ENCODE measurements at regions of chr4 and their contacts with region 1.

Region 1: DNA sequence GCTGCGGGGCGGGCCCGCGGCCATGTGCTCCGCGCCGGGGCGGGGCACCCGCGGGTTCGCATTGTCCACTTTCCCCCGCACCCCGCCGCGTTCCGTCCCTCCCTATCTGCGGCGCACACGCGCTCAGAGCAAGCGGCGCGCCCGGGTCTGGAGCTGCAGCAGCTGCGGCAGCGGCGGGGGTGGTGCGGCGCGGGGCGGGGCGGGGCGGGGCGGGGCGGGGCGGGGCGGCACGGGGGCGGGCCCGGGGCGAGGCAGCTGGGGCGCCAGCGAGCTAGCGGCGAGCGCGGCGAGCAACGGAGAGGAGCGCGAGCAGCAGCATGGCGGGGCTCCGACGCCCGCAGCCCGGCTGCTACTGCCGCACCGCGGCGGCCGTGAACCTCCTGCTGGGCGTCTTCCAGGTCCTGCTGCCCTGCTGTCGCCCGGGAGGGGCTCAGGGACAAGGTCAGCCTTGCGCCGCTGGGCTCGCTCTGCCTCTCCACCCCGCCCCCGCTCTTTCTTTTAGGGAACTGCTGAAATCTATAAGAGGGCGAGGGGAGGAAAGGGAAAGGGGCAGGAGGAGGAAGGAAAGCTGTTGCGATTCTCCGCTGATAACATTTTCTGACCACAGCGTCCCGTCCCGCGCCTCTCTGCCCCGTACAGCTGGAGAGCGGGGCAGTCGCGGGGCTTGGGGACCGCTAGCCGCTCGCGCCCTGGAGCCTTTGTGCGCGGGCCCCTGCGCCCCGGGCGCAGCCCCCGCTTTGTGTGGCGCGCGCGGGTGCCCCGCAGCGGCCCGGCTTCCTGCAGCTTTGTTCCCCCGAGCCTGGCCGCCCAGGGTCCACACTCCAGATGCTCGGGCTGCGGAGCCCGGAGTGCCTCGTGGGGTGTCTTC is at the start of gene TMEM131L:
- DNase-seq: peak; percentile 47 to 92
- ATAC-seq: peak; percentile 71 to 88 (median 84)
- H3K4me3 ChIP-seq: peak within 1 kb of the TSS; percentile 68
- H3K4me3 Mint-ChIP-seq: peak within 1 kb of the TSS; percentile 96
- H3K27ac ChIP-seq: peak within 1 kb of the TSS; percentile 76
- H3K27ac Mint-ChIP-seq: peak within 1 kb of the TSS; percentile 96 to 98
- H3K4me1 ChIP-seq: peaks cover 34% of the 10 kb centered on the region
- H3K4me1 Mint-ChIP-seq: peaks cover 55 to 56% of the 10 kb centered on the region in 2 donors
- H3K27me3 ChIP-seq: no peaks in the 10 kb centered on the region
- H3K27me3 Mint-ChIP-seq: no peaks in the 10 kb centered on the region
- CTCF ChIP-seq: no peak
- total RNA-seq, gene TMEM131L: 67.8 to 105 (median 71.1) TPM

Region 2: GRCh38 chr4:153438916-153439756 is 27.2 kb before region 1 on chr4:
- intact Hi-C with region 1: loop called (anchors 2 kb)
- DNase-seq: peak; percentile 38 to 66
- ATAC-seq: peak; percentile 86 to 92 (median 87)
- H3K4me3 ChIP-seq: peak overlapping the region; percentile 51
- H3K4me3 Mint-ChIP-seq: peak overlapping the region; percentile 89
- H3K27ac ChIP-seq: peak overlapping the region; percentile 98
- H3K27ac Mint-ChIP-seq: peak overlapping the region; percentile 90 to 92
- H3K4me1 ChIP-seq: peaks cover 30% of the 10 kb centered on the region
- H3K4me1 Mint-ChIP-seq: peaks cover 19 to 20% of the 10 kb centered on the region in 2 donors
- H3K27me3 ChIP-seq: no peaks in the 10 kb centered on the region
- H3K27me3 Mint-ChIP-seq: no peaks in the 10 kb centered on the region
- CTCF ChIP-seq: no peak

Region 3: DNA sequence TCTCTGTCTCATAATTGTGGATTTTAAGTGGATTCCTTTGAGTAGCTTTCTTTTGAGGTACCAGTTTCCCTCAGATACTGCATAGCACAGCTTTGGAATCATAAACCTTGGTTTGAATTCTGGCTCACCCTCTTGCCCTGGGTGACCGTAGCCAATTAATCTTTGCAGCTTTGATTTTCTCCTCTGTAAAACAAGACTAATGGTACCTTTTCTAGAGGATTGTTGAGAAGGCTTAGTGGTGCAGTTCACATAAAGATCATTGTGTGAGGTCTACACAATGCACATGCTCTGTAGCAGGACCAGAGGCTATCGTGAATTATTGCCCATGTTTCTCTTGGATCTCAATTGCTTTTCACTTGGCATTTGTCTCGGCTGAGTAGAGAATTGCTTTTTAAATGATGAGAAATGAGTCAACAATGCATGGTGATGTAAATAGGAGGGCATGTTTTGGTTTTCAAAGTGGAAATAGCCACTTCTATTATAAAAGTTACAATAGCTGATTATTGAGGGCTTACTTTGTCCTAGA is 47.7 kb after region 1 on chr4:
- intact Hi-C with region 1: no loop called
- DNase-seq: no peak
- ATAC-seq: no peak
- H3K4me3 ChIP-seq: no peak overlapping the region
- H3K4me3 Mint-ChIP-seq: no peak overlapping the region
- H3K27ac ChIP-seq: no peak overlapping the region
- H3K27ac Mint-ChIP-seq: peak overlapping the region; percentile 42 to 63
- H3K4me1 ChIP-seq: peaks cover 9% of the 10 kb centered on the region
- H3K4me1 Mint-ChIP-seq: peaks cover 73 to 80% of the 10 kb centered on the region in 2 donors
- H3K27me3 ChIP-seq: no peaks in the 10 kb centered on the region
- H3K27me3 Mint-ChIP-seq: no peaks in the 10 kb centered on the region
- CTCF ChIP-seq: no peak

Region 4: GRCh38 chr4:153573881-153574802 is 107.8 kb after region 1 on chr4:
- intact Hi-C with region 1: loop called (anchors 10 kb)
- DNase-seq: peak; percentile 42 to 82
- ATAC-seq: peak; percentile 86 to 96 (median 95)
- H3K4me3 ChIP-seq: no peak overlapping the region
- H3K4me3 Mint-ChIP-seq: no peak overlapping the region
- H3K27ac ChIP-seq: peak overlapping the region; percentile 44
- H3K27ac Mint-ChIP-seq: peak overlapping the region; percentile 25 to 71
- H3K4me1 ChIP-seq: peaks cover 15% of the 10 kb centered on the region
- H3K4me1 Mint-ChIP-seq: peaks cover 38 to 52% of the 10 kb centered on the region in 2 donors
- H3K27me3 ChIP-seq: no peaks in the 10 kb centered on the region
- H3K27me3 Mint-ChIP-seq: no peaks in the 10 kb centered on the region
- CTCF ChIP-seq: peak; percentile 67

Region 5: DNA sequence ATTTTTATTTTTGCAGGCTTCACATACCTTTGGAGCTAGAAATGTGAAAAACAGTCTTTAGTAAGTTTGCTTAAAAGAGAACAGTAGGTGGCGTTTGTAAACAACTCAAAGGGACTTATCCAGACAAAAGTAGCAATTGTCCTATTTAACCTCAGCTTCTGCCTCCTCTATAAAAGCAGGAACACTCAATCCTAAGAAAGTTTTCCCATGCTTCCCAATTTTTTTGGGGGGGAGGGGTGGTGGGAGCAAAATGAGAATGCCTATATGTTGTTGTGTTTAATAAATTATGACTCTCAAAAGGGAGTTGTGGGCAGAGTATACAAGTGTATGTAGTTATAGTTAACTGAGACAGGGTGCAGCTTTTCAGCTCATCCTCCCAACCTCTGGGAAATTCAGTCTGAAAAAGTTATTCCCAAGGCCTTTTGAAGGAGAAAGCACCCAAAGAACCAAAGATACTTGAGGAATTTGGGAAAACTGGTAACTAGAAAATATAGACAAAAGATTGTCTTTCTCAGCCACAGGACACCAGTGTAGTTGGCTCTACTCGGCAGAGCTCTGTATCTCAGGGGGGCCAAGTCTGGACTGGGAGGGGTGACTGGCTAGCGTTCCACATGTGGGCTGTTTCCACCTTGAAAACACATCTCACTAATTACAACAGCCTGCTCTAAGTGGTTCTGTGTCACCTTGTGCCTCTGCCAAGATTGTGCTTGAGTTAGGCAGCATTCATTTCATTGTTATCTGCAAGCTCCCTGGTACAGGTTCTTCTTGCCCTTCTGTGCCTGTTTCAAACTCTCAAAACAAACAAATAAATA is 319.8 kb after region 1 on chr4:
- intact Hi-C with region 1: no loop called
- DNase-seq: peak in 1 of 2 donors; percentile 44
- ATAC-seq: no peak
- H3K4me3 ChIP-seq: no peak overlapping the region
- H3K4me3 Mint-ChIP-seq: no peak overlapping the region
- H3K27ac ChIP-seq: no peak overlapping the region
- H3K27ac Mint-ChIP-seq: no peak overlapping the region
- H3K4me1 ChIP-seq: peaks cover 24% of the 10 kb centered on the region
- H3K4me1 Mint-ChIP-seq: peaks cover under 1 to 11% of the 10 kb centered on the region in 2 donors
- H3K27me3 ChIP-seq: peaks cover 31% of the 10 kb centered on the region
- H3K27me3 Mint-ChIP-seq: peaks cover 71 to 80% of the 10 kb centered on the region in 2 donors
- CTCF ChIP-seq: no peak

Measured in natural killer cell (primary cell).